ENCODE measurements at regions of chr12 and their contacts with region 1.

Region 1: DNA sequence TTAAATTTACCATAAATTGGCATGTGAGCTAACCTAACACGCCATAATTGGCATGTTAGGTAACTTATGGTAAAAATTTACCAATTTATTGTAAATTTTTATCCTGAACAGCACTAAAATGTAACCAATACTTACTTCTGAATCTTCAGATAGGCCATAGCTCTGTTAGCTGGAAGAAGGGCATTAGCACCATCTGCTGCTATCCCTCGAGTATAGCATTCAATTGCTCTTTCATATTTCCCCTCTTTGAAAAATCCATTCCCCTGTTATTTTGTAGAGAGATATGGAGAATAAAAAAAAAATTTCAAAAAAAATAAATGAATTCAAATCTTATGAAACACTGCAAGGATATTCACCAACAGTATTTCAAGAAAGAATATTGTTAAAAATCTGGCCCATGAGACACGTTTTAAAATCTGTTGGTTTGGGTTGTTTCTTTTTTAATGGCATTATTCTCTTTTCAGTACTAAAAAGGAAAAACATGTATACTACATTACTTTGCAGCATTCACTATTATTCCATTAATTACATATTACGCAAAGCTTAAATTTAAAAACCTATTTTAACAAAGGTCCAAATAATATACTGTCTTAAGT is 19.1 kb downstream of the RPAP3 start:
- DNase-seq: peak; percentile 57
- H3K4me3 Mint-ChIP-seq: no peak overlapping the region
- H3K27ac Mint-ChIP-seq: no peak overlapping the region
- H3K4me1 Mint-ChIP-seq: peaks cover 12% of the 10 kb centered on the region
- H3K27me3 Mint-ChIP-seq: no peaks in the 10 kb centered on the region

Region 2: DNA sequence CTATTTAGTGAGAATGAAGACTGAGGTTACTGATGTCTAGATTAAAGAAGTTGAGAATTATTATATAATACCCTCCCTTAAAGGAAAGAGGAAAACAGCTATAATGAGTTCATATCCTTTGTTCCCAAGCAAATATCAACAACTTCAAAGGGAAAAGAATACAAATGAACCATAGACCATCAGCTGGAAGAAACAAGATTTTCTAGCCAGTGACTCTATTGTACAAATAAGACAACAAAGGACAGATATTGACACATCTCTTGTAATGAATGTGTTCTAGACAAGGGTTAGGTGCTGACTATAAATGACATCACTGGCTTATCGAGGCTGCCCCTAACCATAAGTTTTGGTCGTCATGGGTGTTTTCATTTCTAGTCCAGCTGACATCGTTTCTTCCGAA is 909.2 kb before region 1 on chr12:
- CTCF ChIA-PET with region 1: no interaction called
- intact Hi-C with region 1: loop called (anchors 5 kb)
- DNase-seq: no peak
- H3K4me3 Mint-ChIP-seq: no peak overlapping the region
- H3K27ac Mint-ChIP-seq: no peak overlapping the region
- H3K4me1 Mint-ChIP-seq: no peaks in the 10 kb centered on the region
- H3K27me3 Mint-ChIP-seq: no peaks in the 10 kb centered on the region

Region 3: GRCh38 chr12:47758834-47759690 is 72.3 kb after region 1 on chr12 and contains the start of gene RAPGEF3:
- CTCF ChIA-PET with region 1: no interaction called
- intact Hi-C with region 1: no loop called
- DNase-seq: peak; percentile 86
- H3K4me3 Mint-ChIP-seq: peak within 1 kb of the TSS; percentile 65
- H3K27ac Mint-ChIP-seq: no peak within 1 kb of the TSS
- H3K4me1 Mint-ChIP-seq: peaks cover 24% of the 10 kb centered on the region
- H3K27me3 Mint-ChIP-seq: no peaks in the 10 kb centered on the region
- total RNA-seq, gene RAPGEF3: 1.5 to 1.6 TPM

Region 4: DNA sequence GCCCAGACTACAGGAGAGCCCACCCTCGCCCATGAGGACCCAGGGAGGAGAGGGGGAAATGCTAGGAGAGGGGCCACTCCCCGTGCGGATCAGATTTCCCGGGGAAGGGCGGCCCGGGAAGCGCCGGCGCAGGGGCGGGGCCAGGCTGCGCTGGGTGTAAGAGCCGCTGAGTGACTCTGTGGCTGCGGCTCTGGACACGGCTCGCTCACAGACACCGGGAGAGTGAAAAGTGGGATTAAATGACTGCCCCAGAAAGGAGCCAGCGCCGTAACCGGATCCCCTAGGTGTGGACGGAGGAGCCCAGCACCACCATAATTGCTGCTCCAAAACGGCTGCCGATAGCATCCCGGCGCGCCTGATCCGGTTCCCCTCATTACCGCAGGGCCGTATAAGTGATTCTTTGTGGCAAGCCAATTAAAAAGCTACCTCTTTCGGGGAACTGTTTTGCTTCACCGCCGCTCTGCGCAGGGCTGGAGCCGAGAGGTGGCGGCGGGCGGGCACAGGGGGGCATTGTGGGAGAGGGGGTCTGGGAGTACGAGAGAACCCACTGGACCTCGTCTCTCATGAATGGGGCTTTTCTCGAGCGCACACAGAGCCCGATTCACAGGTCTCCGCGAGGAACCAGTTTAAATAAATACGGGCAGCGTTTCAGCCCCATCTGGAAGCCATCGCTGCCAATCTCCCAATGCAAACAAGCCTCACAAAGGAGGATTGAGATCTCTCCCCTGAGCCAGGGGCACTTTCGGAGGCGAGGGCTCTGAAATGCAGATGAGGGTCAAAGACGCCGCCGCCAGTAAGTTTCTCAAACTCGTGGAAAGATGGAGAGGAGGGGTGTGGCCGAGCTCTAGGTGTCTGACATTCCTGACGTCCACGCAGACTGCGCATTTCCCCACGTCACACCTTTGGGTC is 315.0 kb after region 1 on chr12:
- CTCF ChIA-PET with region 1: no interaction called
- intact Hi-C with region 1: no loop called
- DNase-seq: no peak
- H3K4me3 Mint-ChIP-seq: peak overlapping the region; percentile 64
- H3K27ac Mint-ChIP-seq: no peak overlapping the region
- H3K4me1 Mint-ChIP-seq: peaks cover 29% of the 10 kb centered on the region
- H3K27me3 Mint-ChIP-seq: peaks cover 75% of the 10 kb centered on the region